Activated CD4-positive, alpha-beta memory T cell treated with anti-CD3 and anti-CD28 coated beads for 36 hours (primary cell): ENCODE measurements at regions of chr5 and their contacts with region 1.

Region 1: GRCh38 chr5:115634343-115635132 is 8.7 kb upstream of the TMED7 start:
- DNase-seq: peak; percentile 90
- H3K4me3 Mint-ChIP-seq: no peak overlapping the region
- H3K27ac Mint-ChIP-seq: no peak overlapping the region
- H3K4me1 Mint-ChIP-seq: peaks cover 27% of the 10 kb centered on the region
- H3K27me3 Mint-ChIP-seq: peaks cover 23% of the 10 kb centered on the region

Region 2: GRCh38 chr5:115835481-115835880 is 200.9 kb after region 1 on chr5:
- CTCF ChIA-PET with region 1: interaction called, 13 read pairs
- POLR2A ChIA-PET with region 1: no interaction called
- intact Hi-C with region 1: loop called (anchors 1 kb)
- DNase-seq: no peak
- H3K4me3 Mint-ChIP-seq: no peak overlapping the region
- H3K27ac Mint-ChIP-seq: no peak overlapping the region
- H3K4me1 Mint-ChIP-seq: peaks cover 33% of the 10 kb centered on the region
- H3K27me3 Mint-ChIP-seq: no peaks in the 10 kb centered on the region

Region 3: DNA sequence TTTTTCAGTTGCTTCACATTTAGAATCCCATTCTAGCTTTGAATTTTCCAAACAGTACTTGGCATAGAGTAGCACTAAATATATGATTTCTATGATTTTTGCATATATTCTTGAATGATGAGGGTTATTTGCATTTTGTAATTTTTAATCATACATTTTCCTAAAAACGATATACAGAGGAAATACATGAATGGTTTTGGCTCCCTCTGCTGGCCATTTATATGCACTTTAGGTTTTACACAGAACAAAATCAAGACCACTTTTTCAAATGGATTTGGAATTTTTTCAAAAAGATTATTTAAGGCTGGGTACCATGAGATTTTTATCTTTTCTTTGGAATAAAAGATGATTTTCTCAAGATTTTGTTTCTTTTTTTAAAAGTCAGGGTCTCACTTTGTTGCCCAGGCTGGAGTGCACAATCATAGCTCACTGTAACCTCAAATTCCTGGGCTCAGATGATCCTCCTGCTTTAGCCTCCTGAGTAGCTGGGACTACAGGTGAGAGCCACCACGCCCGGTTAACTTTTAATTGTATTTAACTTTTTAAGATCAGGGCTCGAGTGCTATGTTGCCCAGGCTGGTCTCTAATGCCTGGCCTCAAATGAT is 433.6 kb after region 1 on chr5:
- CTCF ChIA-PET with region 1: interaction called, 24 read pairs
- POLR2A ChIA-PET with region 1: no interaction called
- intact Hi-C with region 1: loop called (anchors 1 kb)
- DNase-seq: no peak
- H3K4me3 Mint-ChIP-seq: no peak overlapping the region
- H3K27ac Mint-ChIP-seq: no peak overlapping the region
- H3K4me1 Mint-ChIP-seq: no peaks in the 10 kb centered on the region
- H3K27me3 Mint-ChIP-seq: peaks cover 25% of the 10 kb centered on the region